PC-9 (cell line): ENCODE measurements at regions of chr5 and their contacts with region 1.

Region 1: DNA sequence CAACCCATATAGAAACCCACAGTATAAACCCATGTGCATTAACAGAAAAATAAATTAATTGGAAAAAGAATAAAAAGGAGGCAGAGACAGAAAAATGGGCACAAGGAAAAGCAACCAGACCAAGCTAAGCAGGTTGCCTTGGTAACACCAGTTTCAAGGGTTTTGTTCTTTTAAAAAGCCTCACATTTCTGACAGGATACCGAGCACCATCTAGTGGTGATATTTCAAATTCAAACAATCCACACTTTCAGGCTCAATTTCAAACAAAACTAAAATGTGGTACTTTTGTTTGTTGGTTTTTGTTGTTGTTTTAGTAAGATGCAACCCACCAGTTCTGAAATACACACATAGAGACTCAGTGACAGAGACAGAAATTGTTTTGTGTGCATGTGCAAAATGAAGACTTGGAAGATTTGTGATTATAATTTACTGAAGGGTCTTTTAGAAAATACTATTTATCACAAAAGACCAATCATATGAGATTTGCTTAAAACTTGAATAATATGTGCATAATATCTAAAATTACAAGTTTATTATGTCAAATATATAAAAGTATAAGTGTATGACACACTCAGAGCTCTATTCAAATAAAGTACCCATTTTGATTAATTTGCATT is 318.2 kb downstream of the SLCO4C1 start:
- DNase-seq: no peak
- H3K4me3 ChIP-seq: no peak overlapping the region
- H3K27ac ChIP-seq: no peak overlapping the region
- H3K4me1 ChIP-seq: no peaks in the 10 kb centered on the region
- H3K27me3 ChIP-seq: no peaks in the 10 kb centered on the region
- CTCF ChIP-seq: peak; percentile 75

Region 2: GRCh38 chr5:101611039-101611438 is 366.8 kb before region 1 on chr5:
- CTCF ChIA-PET with region 1: no interaction called
- POLR2A ChIA-PET with region 1: no interaction called
- intact Hi-C with region 1: loop called (anchors 10 kb)
- DNase-seq: no peak
- H3K4me3 ChIP-seq: no peak overlapping the region
- H3K27ac ChIP-seq: no peak overlapping the region
- H3K4me1 ChIP-seq: no peaks in the 10 kb centered on the region
- H3K27me3 ChIP-seq: no peaks in the 10 kb centered on the region
- CTCF ChIP-seq: no peak

Region 3: GRCh38 chr5:101995585-101995984 is 17.7 kb after region 1 on chr5:
- CTCF ChIA-PET with region 1: no interaction called
- POLR2A ChIA-PET with region 1: no interaction called
- intact Hi-C with region 1: no loop called
- DNase-seq: peak; percentile 9 to 78
- H3K4me3 ChIP-seq: no peak overlapping the region
- H3K27ac ChIP-seq: peak overlapping the region; percentile 45
- H3K4me1 ChIP-seq: peaks cover 17% of the 10 kb centered on the region
- H3K27me3 ChIP-seq: no peaks in the 10 kb centered on the region
- CTCF ChIP-seq: no peak